Sigmoid colon (tissue), 7 donors: ENCODE measurements at regions of chr13 and their contacts with region 1.

Region 1: DNA sequence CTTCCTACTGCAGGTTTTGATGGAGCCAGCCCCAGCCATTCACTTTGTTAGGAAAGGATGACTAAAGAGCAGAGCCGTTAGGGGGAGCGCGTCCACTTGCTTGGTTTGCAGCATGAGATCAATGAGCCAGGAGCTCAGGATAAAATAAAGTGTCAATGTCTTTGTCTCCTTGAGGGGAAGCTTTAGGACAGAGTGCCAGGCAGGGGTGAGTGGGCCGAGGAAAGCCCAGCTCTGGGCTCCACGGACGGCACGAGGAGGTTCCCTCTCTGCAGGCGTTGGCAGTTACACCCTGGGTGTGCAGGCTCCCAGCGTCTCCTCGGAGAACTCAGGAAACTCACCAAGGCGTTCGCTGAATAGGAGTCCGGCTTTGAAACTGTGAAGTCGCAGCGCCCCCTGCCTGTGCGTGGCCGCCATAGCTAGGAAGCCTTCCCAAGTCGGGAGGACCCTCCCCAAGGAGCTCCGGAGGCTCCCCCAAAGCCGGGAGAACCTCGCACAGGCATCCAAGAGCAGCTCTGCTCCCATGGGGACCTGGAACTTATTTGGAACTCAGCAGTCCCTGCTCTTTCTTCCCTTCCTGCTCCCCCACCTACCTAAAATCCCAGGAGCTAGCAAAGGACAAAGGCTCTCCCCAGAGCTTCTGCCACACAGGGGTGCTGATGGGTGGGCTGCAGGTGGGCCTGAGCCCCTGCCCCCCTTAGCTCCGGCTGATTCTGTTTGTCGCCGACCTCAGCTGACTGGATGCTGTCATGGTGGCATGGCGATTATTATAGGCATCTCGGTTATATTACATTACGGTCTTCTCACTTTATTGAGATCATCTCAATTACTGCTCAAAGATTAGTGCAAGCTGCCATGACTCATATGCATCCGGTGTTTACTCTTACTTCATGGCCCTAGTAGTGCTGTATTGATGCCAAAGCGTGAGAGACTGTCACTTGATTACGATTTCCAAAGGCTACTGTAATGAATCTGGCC is 34.4 kb downstream of the GSX1 start:
- DNase-seq: peak; percentile 86
- H3K4me3 ChIP-seq: peak overlapping the region in 3 of 4 donors; percentile 5 to 28 (median 9)
- H3K27ac ChIP-seq: no peak overlapping the region
- H3K4me1 ChIP-seq: peaks cover 0 to 15% (median 6%) of the 10 kb centered on the region in 4 donors
- H3K27me3 ChIP-seq: peaks cover 1 to 72% (median 27%) of the 10 kb centered on the region in 3 donors
- CTCF ChIP-seq: peak; percentile 75 to 94 (median 92)
- EP300 ChIP-seq: no peak
- POLR2A ChIP-seq: no peak

Region 2: DNA sequence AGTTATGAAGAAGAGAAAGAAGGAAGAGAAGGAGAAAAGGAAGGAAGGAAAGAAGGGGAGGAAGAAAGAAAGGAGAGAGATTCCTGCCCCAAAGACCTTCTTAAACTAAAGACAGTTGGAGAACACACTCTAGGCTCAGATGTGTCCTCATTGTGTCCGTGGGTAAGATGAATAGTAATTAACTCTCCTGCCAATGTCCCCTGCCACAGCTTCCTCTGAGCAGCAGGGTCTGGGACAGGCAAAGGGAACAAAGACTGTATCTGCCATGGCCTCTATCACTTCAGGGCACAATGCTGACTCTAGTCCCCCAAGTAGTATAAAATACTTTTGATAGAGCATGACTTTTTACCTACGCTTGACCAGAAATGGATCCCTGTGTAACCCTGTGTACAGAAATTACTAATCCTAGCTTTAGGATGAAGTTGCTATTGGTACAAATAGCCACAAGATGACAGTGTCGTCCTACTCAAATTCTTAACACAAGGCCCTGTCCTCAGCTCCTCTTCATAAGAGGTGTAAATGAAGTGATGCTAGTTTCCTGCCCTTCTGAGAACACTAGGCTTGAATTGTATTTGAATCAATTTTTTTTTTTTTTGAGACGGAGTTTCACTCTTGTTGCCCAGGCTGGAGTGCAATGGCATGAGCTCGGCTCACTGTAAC is 879.9 kb before region 1 on chr13:
- intact Hi-C with region 1: loop called (anchors 10 kb)
- DNase-seq: no peak
- H3K4me3 ChIP-seq: no peak overlapping the region
- H3K27ac ChIP-seq: no peak overlapping the region
- H3K4me1 ChIP-seq: peaks cover 0 to under 1% (median 0%) of the 10 kb centered on the region in 4 donors
- H3K27me3 ChIP-seq: peaks cover 0 to 7% (median 0%) of the 10 kb centered on the region in 3 donors
- CTCF ChIP-seq: peak; percentile 86 to 91 (median 90)
- EP300 ChIP-seq: no peak
- POLR2A ChIP-seq: no peak

Region 3: DNA sequence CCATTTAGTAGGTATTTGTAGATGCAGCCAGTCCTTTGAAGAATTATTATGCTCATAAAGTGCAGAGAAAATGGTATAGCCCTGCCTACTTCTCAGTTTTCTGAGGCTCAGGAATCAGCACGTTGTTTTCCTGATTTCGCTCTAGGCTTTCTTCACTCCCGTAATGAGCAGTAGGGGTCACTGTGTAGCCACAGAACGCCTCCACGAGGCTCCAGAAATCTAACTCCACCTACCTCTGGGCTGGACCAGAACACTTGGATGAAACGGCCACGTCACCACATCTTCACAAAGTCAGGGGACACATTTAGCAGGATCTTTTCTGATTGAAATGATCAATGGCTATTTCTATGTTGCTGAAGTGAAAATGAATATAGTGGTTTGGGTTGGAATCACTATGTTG is 452.0 kb before region 1 on chr13:
- intact Hi-C with region 1: loop called (anchors 1 kb)
- DNase-seq: peak; percentile 78
- H3K4me3 ChIP-seq: no peak overlapping the region
- H3K27ac ChIP-seq: no peak overlapping the region
- H3K4me1 ChIP-seq: peaks cover 0 to 10% (median 6%) of the 10 kb centered on the region in 4 donors
- H3K27me3 ChIP-seq: peaks cover 0 to 27% (median 0%) of the 10 kb centered on the region in 3 donors
- CTCF ChIP-seq: peak; percentile 50 to 74 (median 71)
- EP300 ChIP-seq: no peak
- POLR2A ChIP-seq: no peak

Region 4: GRCh38 chr13:27533155-27533643 is 293.5 kb before region 1 on chr13:
- intact Hi-C with region 1: loop called (anchors 1 kb)
- DNase-seq: peak; percentile 87
- H3K4me3 ChIP-seq: peak overlapping the region in 1 of 4 donors; percentile 16
- H3K27ac ChIP-seq: no peak overlapping the region
- H3K4me1 ChIP-seq: peaks cover 0 to 16% (median 10%) of the 10 kb centered on the region in 4 donors
- H3K27me3 ChIP-seq: no peaks in the 10 kb centered on the region
- CTCF ChIP-seq: peak; percentile 69 to 91 (median 84)
- EP300 ChIP-seq: no peak
- POLR2A ChIP-seq: no peak

Region 5: GRCh38 chr13:27556109-27556508 is 270.6 kb before region 1 on chr13:
- intact Hi-C with region 1: loop called (anchors 2 kb)
- DNase-seq: peak; percentile 66
- H3K4me3 ChIP-seq: no peak overlapping the region
- H3K27ac ChIP-seq: no peak overlapping the region
- H3K4me1 ChIP-seq: no peaks in the 10 kb centered on the region
- H3K27me3 ChIP-seq: no peaks in the 10 kb centered on the region
- CTCF ChIP-seq: no peak
- EP300 ChIP-seq: no peak
- POLR2A ChIP-seq: no peak

Region 6: GRCh38 chr13:27665333-27665732 is 161.3 kb before region 1 on chr13:
- intact Hi-C with region 1: loop called (anchors 2 kb)
- DNase-seq: no peak
- H3K4me3 ChIP-seq: no peak overlapping the region
- H3K27ac ChIP-seq: no peak overlapping the region
- H3K4me1 ChIP-seq: peaks cover 0 to 37% (median 11%) of the 10 kb centered on the region in 4 donors
- H3K27me3 ChIP-seq: no peaks in the 10 kb centered on the region
- CTCF ChIP-seq: no peak
- EP300 ChIP-seq: no peak
- POLR2A ChIP-seq: no peak

Region 7: GRCh38 chr13:27878274-27878673 is 51.6 kb after region 1 on chr13:
- intact Hi-C with region 1: no loop called
- DNase-seq: no peak
- H3K4me3 ChIP-seq: no peak overlapping the region
- H3K27ac ChIP-seq: no peak overlapping the region
- H3K4me1 ChIP-seq: no peaks in the 10 kb centered on the region
- H3K27me3 ChIP-seq: peaks cover 0 to 52% (median 3%) of the 10 kb centered on the region in 3 donors
- CTCF ChIP-seq: no peak
- EP300 ChIP-seq: no peak
- POLR2A ChIP-seq: no peak

Region 8: DNA sequence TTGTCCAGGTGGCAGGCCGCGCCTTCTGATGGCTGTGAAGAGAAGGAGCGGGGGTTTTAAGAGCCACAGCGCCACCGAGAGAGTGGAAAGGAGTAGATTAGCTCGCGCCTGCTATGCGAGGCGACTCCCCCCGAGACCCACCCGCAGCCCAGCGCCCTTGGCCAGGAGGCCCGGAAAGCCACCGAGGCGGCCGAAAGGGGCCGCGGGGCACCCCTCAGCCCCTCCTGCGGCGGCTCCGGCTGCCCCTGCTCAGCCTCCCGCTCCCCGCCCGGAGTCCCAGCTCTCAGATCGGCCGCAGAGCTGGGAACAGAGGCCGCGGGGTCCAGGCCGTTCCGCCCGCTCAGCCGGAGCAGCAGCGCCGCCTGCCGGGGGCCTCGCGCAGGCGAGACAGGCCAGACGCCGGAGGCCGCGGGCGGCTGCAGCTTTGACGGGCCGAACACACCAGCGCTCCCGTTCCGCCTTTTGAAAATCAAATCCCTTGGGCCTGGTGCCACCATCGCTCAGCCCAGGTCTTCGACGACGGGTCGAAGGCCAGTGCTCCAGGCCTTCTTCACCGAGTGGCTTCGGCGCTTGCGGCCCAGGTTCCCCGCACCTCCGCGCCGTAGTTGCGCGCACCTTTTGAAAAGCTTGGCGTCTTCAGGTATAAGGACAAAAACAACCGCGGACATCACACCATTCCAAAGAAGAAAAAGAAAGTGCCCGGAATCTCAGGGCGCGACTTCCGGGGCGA is 127.2 kb after region 1 on chr13:
- intact Hi-C with region 1: loop called (anchors 10 kb)
- DNase-seq: peak; percentile 80
- H3K4me3 ChIP-seq: peak overlapping the region; percentile 12 to 51 (median 40)
- H3K27ac ChIP-seq: peak overlapping the region in 1 of 4 donors; percentile 42
- H3K4me1 ChIP-seq: peaks cover 0 to 16% (median 15%) of the 10 kb centered on the region in 4 donors
- H3K27me3 ChIP-seq: peaks cover 42 to 93% (median 63%) of the 10 kb centered on the region in 3 donors
- CTCF ChIP-seq: peak; percentile 51 to 80 (median 66)
- EP300 ChIP-seq: no peak
- POLR2A ChIP-seq: no peak

Region 9: DNA sequence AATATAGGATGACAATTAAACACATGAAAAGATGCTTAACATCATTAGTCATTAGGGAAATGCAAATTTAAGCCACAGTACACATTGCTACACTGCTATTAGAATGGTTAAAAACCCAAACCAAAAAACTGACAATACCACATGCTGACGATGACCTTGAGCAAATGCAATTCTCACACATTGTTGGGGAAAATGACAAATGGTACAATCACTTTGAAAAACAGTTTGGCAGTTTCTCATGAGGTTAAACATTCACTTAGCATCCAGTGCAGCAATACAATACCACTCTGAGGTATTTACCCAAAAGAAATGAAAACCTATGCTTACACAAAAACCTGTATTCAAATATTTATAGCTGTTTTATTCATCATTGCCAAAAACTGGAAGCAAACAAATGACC is 262.4 kb after region 1 on chr13:
- intact Hi-C with region 1: no loop called
- DNase-seq: no peak
- H3K4me3 ChIP-seq: no peak overlapping the region
- H3K27ac ChIP-seq: no peak overlapping the region
- H3K4me1 ChIP-seq: no peaks in the 10 kb centered on the region
- H3K27me3 ChIP-seq: no peaks in the 10 kb centered on the region
- CTCF ChIP-seq: no peak
- EP300 ChIP-seq: no peak
- POLR2A ChIP-seq: no peak